CD8-positive, alpha-beta memory T cell (primary cell): ENCODE measurements at regions of chr7 and their contacts with region 1.

Region 1: DNA sequence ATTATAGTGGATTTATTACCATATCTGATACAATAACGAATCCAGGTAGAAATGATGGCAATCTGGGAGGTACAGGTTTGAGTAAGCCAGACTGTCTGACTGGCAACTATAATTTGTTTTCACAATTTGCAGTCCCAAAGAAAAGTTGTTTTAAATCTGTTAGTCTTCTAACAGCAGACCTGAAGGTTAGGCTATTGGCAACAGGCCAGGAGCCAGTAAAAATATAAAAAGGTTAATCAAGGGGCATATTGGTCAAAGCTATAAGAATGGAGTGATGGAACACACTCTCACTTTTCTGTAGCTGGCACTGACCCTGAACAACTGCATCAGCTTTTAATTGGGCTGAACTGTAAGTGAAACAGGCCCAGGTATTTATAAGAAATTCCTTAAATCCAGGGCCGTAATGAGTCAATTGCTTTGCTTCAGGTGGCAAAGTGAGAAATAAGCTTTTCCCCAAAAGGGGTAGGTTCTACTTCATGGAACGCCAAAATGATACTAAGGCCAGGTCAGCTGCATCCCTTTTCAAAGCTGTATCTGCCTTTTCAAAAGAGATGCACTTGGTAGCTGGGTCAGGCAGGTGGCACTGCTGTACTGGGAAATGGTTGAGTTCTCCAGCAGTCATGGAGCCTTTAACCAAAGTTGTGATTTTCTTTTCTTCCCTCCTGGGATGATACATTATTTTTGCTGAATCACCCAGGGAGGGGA is 7.0 kb upstream of the GPR22 start:
- DNase-seq: peak; percentile 12 to 66 (median 30)
- H3K4me3 ChIP-seq: no peak overlapping the region
- H3K4me3 Mint-ChIP-seq: no peak overlapping the region
- H3K27ac ChIP-seq: no peak overlapping the region
- H3K27ac Mint-ChIP-seq: peak overlapping the region in 2 of 8 donors; percentile 1 to 27
- H3K4me1 ChIP-seq: no peaks in the 10 kb centered on the region
- H3K4me1 Mint-ChIP-seq: peaks cover 2 to 8% (median 5%) of the 10 kb centered on the region in 3 donors
- H3K27me3 ChIP-seq: no peaks in the 10 kb centered on the region
- H3K27me3 Mint-ChIP-seq: no peaks in the 10 kb centered on the region

Region 2: DNA sequence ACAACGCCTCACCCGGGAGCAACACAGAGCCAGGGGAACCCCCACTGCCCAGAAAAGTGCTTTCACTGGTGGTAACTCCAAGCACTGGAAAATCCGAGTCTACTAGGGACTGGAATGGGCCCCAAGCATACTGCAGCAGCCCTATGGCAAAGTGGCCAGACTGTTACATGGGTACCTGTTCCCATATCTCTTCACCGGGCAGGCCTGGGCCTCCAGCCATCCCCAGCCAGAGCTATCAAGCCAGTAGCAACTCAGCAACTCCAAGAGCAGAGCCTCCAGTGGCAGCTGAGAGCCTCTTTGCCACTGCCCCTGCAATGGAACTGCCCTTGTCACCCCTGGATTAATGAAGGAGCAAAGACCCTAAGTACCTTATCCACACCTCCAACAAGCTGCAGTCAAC is 220.6 kb before region 1 on chr7:
- CTCF ChIA-PET with region 1: no interaction called
- POLR2A ChIA-PET with region 1: no interaction called
- DNase-seq: no peak
- H3K4me3 ChIP-seq: no peak overlapping the region
- H3K4me3 Mint-ChIP-seq: no peak overlapping the region
- H3K27ac ChIP-seq: no peak overlapping the region
- H3K27ac Mint-ChIP-seq: no peak overlapping the region
- H3K4me1 ChIP-seq: no peaks in the 10 kb centered on the region
- H3K4me1 Mint-ChIP-seq: peaks cover 0 to 8% (median 4%) of the 10 kb centered on the region in 3 donors
- H3K27me3 ChIP-seq: no peaks in the 10 kb centered on the region
- H3K27me3 Mint-ChIP-seq: peaks cover 0 to 1% of the 10 kb centered on the region in 2 donors

Region 3: DNA sequence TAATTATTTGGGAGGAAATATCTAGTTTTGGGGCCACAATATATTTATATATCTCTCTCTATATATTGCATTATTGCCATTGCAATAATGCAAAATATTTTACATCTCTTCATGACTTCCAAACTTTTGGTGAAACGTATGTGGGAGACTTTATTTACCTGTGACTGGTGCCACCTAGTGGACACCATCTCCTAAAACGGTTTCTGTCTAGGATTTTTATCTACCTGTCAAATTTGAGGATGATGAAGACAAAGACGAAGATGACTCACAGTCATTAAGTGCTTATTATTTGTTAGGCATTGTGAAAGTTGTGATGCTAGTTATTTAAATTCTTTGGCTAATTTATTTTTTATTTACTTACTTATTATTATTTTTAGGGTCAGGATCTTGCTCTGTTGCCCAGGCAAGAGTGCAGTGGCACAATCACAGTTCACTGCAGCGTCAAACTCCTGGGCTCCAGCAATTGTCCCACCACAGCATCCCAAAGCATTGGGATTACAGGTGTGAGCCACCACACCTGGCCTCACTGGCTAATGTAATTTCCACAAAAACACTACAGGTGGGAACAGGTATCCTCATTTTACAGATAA is 262.4 kb after region 1 on chr7:
- CTCF ChIA-PET with region 1: interaction called, 18 read pairs
- POLR2A ChIA-PET with region 1: no interaction called
- DNase-seq: peak; percentile 19 to 51 (median 33)
- H3K4me3 ChIP-seq: no peak overlapping the region
- H3K4me3 Mint-ChIP-seq: no peak overlapping the region
- H3K27ac ChIP-seq: no peak overlapping the region
- H3K27ac Mint-ChIP-seq: no peak overlapping the region
- H3K4me1 ChIP-seq: no peaks in the 10 kb centered on the region
- H3K4me1 Mint-ChIP-seq: no peaks in the 10 kb centered on the region
- H3K27me3 ChIP-seq: no peaks in the 10 kb centered on the region
- H3K27me3 Mint-ChIP-seq: peaks cover 5 to 28% of the 10 kb centered on the region in 2 donors